Breast epithelium (tissue), 4 donors: ENCODE measurements at regions of chr1 and their contacts with region 1.

Region 1: DNA sequence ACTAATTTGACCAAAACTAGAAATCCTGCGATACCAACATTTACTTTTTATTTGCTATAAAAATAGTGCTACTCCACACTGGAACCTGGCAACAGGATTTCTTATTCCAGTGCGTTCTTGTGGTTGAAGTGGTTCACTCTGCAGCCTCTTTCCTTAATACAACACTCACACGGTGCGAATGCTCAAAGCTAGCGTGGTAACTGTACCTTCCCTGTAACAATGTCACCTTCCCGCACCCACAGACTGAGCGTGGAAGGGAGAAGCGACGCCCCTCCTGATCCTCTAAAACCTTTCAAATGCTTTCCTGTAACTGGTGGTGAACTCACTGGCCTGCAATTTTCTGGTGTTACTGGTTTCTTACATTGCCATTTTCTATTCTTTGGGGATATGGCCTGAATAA is 132.2 kb downstream of the LRRC53 start:
- DNase-seq: no peak
- H3K4me3 ChIP-seq: no peak overlapping the region
- H3K27ac ChIP-seq: no peak overlapping the region
- H3K4me1 ChIP-seq: no peaks in the 10 kb centered on the region
- H3K27me3 ChIP-seq: no peaks in the 10 kb centered on the region
- CTCF ChIP-seq: no peak
- POLR2A ChIP-seq: no peak

Region 2: DNA sequence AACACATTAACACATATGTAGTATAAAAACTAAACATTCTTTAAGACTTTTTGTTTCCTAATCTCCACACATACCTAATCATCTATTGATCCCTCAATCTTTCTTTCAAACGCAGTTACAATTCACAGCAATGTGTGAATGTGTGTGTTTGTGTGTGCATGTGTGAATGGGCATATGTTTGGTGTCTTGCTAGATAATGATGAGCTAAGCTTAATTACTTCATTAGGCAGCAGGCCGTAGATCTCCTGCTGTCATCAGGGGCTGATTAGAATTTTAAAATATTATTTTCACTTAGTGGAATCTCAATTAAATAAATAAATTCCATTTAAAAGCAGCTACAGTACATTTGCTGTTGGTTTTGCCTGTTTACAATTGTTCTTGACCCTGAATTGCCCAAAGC is 566.1 kb after region 1 on chr1:
- intact Hi-C with region 1: loop called (anchors 5 kb)
- DNase-seq: no peak
- H3K4me3 ChIP-seq: no peak overlapping the region
- H3K27ac ChIP-seq: no peak overlapping the region
- H3K4me1 ChIP-seq: no peaks in the 10 kb centered on the region
- H3K27me3 ChIP-seq: no peaks in the 10 kb centered on the region
- CTCF ChIP-seq: no peak
- POLR2A ChIP-seq: no peak